ENCODE measurements at regions of chr15 and their contacts with region 1.

Region 1: DNA sequence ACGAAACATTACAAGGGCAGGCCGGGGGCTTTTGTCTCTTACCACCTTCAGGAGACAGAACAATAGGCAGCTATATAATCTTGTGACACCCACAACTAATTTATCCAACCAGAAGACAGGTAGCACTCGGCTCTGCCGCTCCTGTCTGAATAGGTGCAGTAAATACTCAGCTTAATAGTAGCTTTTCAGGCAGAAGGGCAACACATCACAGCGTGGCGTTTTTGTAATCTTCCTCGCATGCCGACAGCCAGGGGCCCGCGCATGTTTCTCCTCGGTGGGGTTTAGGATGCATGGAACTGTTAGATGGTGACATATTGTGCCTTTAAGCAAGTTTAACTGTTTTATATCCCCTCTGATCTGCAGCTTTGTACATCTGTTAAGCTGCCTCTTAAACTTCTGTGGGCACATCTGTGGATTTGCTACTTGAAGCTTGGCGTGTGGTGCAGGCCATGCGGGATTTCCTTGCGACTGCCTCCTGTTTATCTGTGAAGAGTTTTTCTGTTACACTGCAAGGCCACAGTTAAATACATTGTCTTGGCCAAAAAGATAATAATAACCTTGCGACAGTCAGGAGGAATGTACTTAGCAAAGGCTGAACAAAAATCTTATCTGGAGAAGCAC is 123.2 kb upstream of the BNIP2 start:
- DNase-seq: no peak
- ATAC-seq: peak; percentile 39
- H3K4me3 Mint-ChIP-seq: no peak overlapping the region
- H3K27ac Mint-ChIP-seq: no peak overlapping the region
- H3K4me1 Mint-ChIP-seq: peaks cover 12% of the 10 kb centered on the region
- H3K27me3 Mint-ChIP-seq: no peaks in the 10 kb centered on the region
- CTCF ChIP-seq: no peak

Region 2: GRCh38 chr15:59797756-59798604 is 14.4 kb before region 1 on chr15:
- CTCF ChIA-PET with region 1: interaction called, 10 read pairs
- POLR2A ChIA-PET with region 1: no interaction called
- DNase-seq: no peak
- ATAC-seq: no peak
- H3K4me3 Mint-ChIP-seq: no peak overlapping the region
- H3K27ac Mint-ChIP-seq: no peak overlapping the region
- H3K4me1 Mint-ChIP-seq: peaks cover 4% of the 10 kb centered on the region
- H3K27me3 Mint-ChIP-seq: no peaks in the 10 kb centered on the region
- CTCF ChIP-seq: no peak

Region 3: DNA sequence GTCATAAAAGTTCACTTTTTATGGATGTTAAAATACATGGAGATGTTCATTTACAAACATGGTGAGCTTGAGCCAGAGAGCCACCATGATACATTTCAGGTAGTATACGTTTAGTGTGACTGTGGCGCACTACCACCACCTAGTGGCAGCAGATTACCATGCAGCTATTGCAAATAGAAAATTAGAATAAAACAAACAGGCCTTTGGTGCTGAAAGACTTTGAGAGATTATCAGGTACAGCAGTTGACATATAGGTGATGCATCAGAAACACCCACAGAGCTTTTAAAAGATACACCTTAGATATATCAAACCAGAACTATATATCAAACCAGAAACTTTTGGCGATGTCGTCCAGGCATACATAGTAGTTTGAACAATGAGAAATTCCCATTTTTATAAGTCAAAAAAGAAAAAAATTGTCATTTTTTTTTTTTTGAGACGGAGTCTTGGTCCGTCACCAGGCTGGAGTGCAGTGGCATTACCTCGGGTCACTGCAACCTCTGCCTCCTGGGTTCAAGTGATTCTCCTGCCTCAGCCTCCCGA is 708.5 kb after region 1 on chr15:
- CTCF ChIA-PET with region 1: no interaction called
- POLR2A ChIA-PET with region 1: no interaction called
- DNase-seq: peak; percentile 83
- ATAC-seq: peak; percentile 87
- H3K4me3 Mint-ChIP-seq: no peak overlapping the region
- H3K27ac Mint-ChIP-seq: no peak overlapping the region
- H3K4me1 Mint-ChIP-seq: peaks cover 15% of the 10 kb centered on the region
- H3K27me3 Mint-ChIP-seq: no peaks in the 10 kb centered on the region
- CTCF ChIP-seq: peak; percentile 77